ENCODE measurements at regions of chr18 and their contacts with region 1.

Region 1: GRCh38 chr18:35949903-35950627 is 22.4 kb upstream of the RMP24 start:
- DNase-seq: peak; percentile 42
- H3K4me3 ChIP-seq: peak overlapping the region; percentile 33 to 61 (median 43)
- H3K27ac ChIP-seq: no peak overlapping the region
- H3K4me1 ChIP-seq: peaks cover 3 to 5% (median 4%) of the 10 kb centered on the region in 4 donors
- H3K27me3 ChIP-seq: peaks cover 5% of the 10 kb centered on the region
- CTCF ChIP-seq: peak; percentile 87 to 98 (median 94)
- EP300 ChIP-seq: no peak
- POLR2A ChIP-seq: no peak

Region 2: DNA sequence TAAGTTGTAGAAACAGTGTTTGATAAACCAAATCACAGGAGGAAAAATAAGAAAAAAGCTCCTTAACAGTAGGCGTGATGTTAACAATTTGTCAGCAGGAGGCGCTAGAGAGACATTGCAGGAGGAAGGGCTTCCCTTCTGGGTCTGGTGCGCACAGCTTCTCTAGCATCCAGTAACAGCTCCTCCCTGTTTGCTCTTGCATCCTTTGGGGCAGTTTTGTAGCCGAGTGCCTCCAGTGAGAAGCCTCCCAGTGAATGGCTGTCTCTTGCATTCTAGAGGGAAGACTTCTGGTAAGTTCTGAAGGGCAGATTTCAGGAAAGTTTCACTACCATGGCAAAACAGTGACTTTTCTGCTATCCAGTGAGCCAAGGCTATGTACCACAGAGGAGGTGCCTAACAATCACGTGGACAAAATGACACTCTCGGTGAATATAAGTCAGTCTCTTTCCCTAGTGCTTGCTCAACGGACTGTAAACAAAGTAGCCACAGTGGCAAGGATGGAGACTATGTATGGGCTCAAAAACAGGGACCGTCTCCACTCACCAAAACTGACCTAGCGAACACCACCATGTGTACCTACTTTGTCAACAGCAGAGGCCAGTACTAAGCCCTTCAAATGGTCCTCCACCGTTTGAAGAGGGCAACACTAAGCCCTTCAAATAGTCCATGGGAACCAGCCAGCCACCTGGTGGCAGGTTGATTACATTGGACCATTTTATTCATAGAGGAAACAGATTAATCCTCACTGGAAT is 563.3 kb before region 1 on chr18:
- in situ Hi-C with region 1: loop called (anchors 25 kb)
- intact Hi-C with region 1: loop called (anchors 10 kb)
- DNase-seq: peak; percentile 68
- H3K4me3 ChIP-seq: no peak overlapping the region
- H3K27ac ChIP-seq: no peak overlapping the region
- H3K4me1 ChIP-seq: no peaks in the 10 kb centered on the region
- H3K27me3 ChIP-seq: no peaks in the 10 kb centered on the region
- CTCF ChIP-seq: peak; percentile 74 to 92 (median 86)
- EP300 ChIP-seq: no peak
- POLR2A ChIP-seq: no peak

Region 3: GRCh38 chr18:35756506-35757117 is 193.5 kb before region 1 on chr18:
- in situ Hi-C with region 1: loop called (anchors 5 to 25 kb)
- intact Hi-C with region 1: loop called (anchors 10 kb)
- DNase-seq: peak; percentile 35
- H3K4me3 ChIP-seq: no peak overlapping the region
- H3K27ac ChIP-seq: no peak overlapping the region
- H3K4me1 ChIP-seq: no peaks in the 10 kb centered on the region
- H3K27me3 ChIP-seq: peaks cover 15% of the 10 kb centered on the region
- CTCF ChIP-seq: peak; percentile 73 to 82 (median 76)
- EP300 ChIP-seq: no peak
- POLR2A ChIP-seq: no peak

Region 4: DNA sequence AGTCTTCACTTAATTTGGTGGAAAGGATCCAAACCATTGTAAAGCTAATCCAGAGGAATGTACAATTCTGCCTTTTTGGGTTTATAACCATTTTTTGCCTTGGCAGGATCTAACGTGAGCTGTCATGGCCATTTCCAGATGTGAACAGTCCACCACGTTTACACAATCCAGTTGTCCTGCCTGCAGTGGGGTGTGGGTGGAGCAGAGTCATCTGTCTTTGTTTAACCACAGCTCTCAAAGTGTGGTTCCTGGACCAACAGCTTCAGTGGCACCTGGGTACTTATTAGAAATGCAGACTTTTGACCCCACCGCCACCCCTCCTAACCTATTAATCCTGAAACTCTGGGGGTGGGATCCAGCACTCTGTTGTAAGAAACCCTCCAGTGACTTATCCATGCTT is 383.3 kb after region 1 on chr18:
- in situ Hi-C with region 1: no loop called
- intact Hi-C with region 1: no loop called
- DNase-seq: no peak
- H3K4me3 ChIP-seq: no peak overlapping the region
- H3K27ac ChIP-seq: no peak overlapping the region
- H3K4me1 ChIP-seq: peaks cover 0 to 24% (median 17%) of the 10 kb centered on the region in 4 donors
- H3K27me3 ChIP-seq: no peaks in the 10 kb centered on the region
- CTCF ChIP-seq: no peak
- EP300 ChIP-seq: no peak
- POLR2A ChIP-seq: no peak

Region 5: DNA sequence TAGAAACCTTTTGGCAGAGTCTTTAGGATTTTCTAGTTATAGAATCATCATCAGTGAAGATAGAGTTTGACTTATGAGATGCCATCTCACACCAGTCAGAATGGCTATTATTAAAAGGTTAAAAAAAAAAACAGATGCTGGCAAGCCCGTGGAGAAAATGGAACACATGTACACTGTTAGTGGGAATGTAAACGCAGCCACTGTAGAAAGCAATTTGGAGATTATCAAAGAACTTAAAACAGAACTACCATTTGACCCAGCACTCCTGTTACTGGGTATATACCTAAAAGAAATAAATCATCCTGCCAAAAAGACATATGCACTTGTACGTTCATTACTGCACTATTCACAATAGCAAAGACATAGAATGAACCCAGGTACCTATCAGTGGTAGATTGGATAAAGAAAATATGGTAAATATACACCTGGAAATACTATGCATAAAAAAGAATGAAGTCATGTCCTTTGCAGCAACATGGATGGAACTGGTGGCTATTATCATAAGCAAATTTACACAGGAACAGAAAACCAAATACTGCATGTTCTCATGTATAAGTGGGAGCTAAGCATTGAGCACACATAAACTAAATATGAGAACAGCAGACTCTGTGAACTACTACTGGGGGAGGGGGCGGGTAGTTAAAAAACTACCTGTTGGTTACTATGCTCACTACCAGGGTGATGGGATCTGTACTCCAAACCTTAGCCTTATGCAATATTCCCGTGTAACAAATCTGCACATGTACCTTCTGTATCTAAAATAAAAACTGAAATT is 1157.9 kb after region 1 on chr18:
- in situ Hi-C with region 1: no loop called
- intact Hi-C with region 1: no loop called
- DNase-seq: no peak
- H3K4me3 ChIP-seq: no peak overlapping the region
- H3K27ac ChIP-seq: no peak overlapping the region
- H3K4me1 ChIP-seq: no peaks in the 10 kb centered on the region
- H3K27me3 ChIP-seq: no peaks in the 10 kb centered on the region
- CTCF ChIP-seq: no peak
- EP300 ChIP-seq: no peak
- POLR2A ChIP-seq: no peak

Measured in transverse colon (tissue), 4 donors.